GM18951 (cell line): ENCODE measurements at regions of chr16 and their contacts with region 1.

Region 1: GRCh38 chr16:19907161-19907992 is 22.7 kb upstream of the GPRC5B start:
- POLR2A ChIP-seq: no peak

Region 2: DNA sequence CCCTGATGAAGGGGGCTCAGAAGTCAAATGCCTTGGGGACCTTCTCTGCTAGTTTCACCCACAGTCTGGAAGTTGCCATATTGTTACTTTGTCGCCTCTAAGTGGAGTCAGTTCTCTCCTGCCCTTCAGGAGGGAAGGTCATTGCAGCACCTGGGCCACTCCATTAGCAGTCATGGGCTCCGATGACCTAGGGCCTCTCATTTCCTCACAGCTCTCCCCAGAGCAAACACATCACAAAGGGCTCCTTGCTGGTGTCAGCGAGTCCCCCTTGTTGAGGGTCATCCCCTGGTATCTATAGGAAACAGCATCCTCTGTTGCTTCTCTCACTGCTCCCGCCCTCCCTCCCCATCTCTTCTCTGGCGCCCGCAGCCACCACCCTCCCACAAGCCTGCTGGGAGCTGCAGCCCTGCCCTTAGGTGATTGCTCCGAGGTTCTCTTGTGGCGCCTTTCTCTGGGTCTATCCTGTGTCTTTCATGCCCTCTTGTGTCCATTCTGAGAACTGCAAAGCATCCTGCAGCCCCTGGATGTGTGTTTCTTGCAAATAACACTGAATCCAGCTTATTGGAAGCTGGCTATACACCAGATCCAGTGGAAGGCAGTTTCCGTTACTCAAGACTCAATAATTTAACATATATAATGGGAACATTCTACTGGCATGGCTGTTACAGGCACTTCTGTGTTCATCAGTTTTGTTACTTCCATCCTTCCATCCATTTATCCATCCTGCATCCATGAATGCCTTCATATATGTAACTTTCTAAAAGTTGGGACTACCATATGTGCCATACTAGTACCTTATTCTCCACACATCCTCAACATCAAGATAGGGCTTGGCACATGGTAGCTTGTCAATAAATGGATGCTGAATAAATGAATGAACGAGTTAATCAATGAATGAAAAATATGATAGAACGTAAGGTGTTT is 476.0 kb after region 1 on chr16:
- in situ Hi-C with region 1: loop called (anchors 25 kb)
- POLR2A ChIP-seq: no peak